GM12878 (cell line): ENCODE measurements at regions of chr5 and their contacts with region 1.

Region 1: GRCh38 chr5:101942321-101943215 is 353.5 kb downstream of the SLCO4C1 start:
- DNase-seq: no peak
- ATAC-seq: peak; percentile 90
- H3K4me3 ChIP-seq: no peak overlapping the region
- H3K27ac ChIP-seq: no peak overlapping the region
- H3K4me1 ChIP-seq: no peaks in the 10 kb centered on the region
- H3K27me3 ChIP-seq: no peaks in the 10 kb centered on the region
- CTCF ChIP-seq: peak; percentile 66 to 76 (median 66); a peak in 5 of 6 replicates
- EP300 ChIP-seq: no peak
- POLR2A ChIP-seq: no peak
- RAD21 ChIP-seq: peak; percentile 72

Region 2: DNA sequence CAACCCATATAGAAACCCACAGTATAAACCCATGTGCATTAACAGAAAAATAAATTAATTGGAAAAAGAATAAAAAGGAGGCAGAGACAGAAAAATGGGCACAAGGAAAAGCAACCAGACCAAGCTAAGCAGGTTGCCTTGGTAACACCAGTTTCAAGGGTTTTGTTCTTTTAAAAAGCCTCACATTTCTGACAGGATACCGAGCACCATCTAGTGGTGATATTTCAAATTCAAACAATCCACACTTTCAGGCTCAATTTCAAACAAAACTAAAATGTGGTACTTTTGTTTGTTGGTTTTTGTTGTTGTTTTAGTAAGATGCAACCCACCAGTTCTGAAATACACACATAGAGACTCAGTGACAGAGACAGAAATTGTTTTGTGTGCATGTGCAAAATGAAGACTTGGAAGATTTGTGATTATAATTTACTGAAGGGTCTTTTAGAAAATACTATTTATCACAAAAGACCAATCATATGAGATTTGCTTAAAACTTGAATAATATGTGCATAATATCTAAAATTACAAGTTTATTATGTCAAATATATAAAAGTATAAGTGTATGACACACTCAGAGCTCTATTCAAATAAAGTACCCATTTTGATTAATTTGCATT is 35.3 kb after region 1 on chr5:
- CTCF ChIA-PET with region 1: interaction called, 31 read pairs
- POLR2A ChIA-PET with region 1: no interaction called
- RAD21 ChIA-PET with region 1: interaction called, 10 read pairs
- SMC1A ChIA-PET with region 1: interaction called, 9 read pairs
- in situ Hi-C with region 1: no loop called
- intact Hi-C with region 1: loop called (anchors 1 kb)
- DNase-seq: peak; percentile 9
- ATAC-seq: peak; percentile 80
- H3K4me3 ChIP-seq: no peak overlapping the region
- H3K27ac ChIP-seq: no peak overlapping the region
- H3K4me1 ChIP-seq: no peaks in the 10 kb centered on the region
- H3K27me3 ChIP-seq: no peaks in the 10 kb centered on the region
- CTCF ChIP-seq: peak; percentile 52 to 68 (median 63)
- EP300 ChIP-seq: no peak
- POLR2A ChIP-seq: no peak
- RAD21 ChIP-seq: peak; percentile 70

Region 3: GRCh38 chr5:102153003-102153759 is 210.6 kb after region 1 on chr5:
- CTCF ChIA-PET with region 1: no interaction called
- POLR2A ChIA-PET with region 1: no interaction called
- RAD21 ChIA-PET with region 1: no interaction called
- SMC1A ChIA-PET with region 1: interaction called, 4 read pairs
- in situ Hi-C with region 1: no loop called
- intact Hi-C with region 1: loop called (anchors 5 kb)
- DNase-seq: no peak
- ATAC-seq: peak; percentile 84
- H3K4me3 ChIP-seq: no peak overlapping the region
- H3K27ac ChIP-seq: no peak overlapping the region
- H3K4me1 ChIP-seq: no peaks in the 10 kb centered on the region
- H3K27me3 ChIP-seq: no peaks in the 10 kb centered on the region
- CTCF ChIP-seq: peak in 2 of 3 experiments; percentile 39 to 44; a peak in 5 of 6 replicates
- EP300 ChIP-seq: no peak
- POLR2A ChIP-seq: no peak
- RAD21 ChIP-seq: no peak; the same call in 1 of the 2 replicates

Region 4: GRCh38 chr5:102223542-102224477 is 281.2 kb after region 1 on chr5:
- CTCF ChIA-PET with region 1: interaction called, 9 read pairs
- POLR2A ChIA-PET with region 1: no interaction called
- RAD21 ChIA-PET with region 1: no interaction called
- SMC1A ChIA-PET with region 1: interaction called, 3 read pairs
- in situ Hi-C with region 1: loop called (anchors 5 kb)
- intact Hi-C with region 1: loop called (anchors 2 kb)
- DNase-seq: no peak
- ATAC-seq: peak; percentile 55; the same call in 2 of the 3 replicates
- H3K4me3 ChIP-seq: no peak overlapping the region
- H3K27ac ChIP-seq: no peak overlapping the region
- H3K4me1 ChIP-seq: no peaks in the 10 kb centered on the region
- H3K27me3 ChIP-seq: no peaks in the 10 kb centered on the region
- CTCF ChIP-seq: peak; percentile 37 to 63 (median 61); a peak in 5 of 6 replicates
- EP300 ChIP-seq: no peak
- POLR2A ChIP-seq: no peak
- RAD21 ChIP-seq: peak; percentile 67